ENCODE measurements at regions of chr1 and their contacts with region 1.

Region 1: DNA sequence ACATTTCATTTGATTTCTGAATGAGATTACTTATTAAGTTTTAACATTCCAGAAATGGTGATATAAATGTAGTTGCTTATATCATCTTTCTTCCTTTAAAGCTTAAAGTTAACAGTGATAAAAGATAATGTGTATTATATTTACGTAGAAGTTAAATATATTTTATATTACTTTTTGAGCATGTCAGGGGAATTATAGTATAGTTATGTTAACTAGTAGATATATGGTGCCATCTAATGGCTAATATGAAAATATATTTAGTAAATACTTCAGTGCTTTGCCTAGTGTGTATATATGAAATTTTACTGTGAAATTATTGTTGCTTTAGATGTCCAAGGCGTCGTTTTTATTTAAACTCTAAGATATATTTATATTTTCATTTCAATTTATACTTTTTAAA is 51.5 kb downstream of the SYT14 start:
- DNase-seq: no peak

Region 2: DNA sequence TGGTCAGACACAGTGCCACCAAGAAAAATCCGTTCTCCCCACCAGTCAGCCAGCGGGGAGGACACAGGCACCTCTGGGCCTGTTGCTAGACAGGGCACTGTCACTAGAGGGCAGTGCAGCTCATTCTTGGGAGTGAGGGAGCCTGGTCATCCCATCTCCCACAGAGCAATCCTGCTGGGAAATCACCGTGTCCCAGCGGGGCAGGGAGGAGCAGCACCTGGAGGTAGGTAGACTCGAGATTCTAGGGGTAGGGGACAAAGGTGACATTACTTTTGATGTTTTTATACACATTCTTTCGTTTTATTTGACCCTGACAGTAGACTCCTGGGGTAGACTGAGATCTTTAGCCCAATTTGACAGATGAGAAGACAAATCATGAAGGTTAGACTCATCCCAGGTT is 412.7 kb before region 1 on chr1:
- intact Hi-C with region 1: loop called (anchors 10 kb)
- DNase-seq: peak; percentile 91

Region 3: DNA sequence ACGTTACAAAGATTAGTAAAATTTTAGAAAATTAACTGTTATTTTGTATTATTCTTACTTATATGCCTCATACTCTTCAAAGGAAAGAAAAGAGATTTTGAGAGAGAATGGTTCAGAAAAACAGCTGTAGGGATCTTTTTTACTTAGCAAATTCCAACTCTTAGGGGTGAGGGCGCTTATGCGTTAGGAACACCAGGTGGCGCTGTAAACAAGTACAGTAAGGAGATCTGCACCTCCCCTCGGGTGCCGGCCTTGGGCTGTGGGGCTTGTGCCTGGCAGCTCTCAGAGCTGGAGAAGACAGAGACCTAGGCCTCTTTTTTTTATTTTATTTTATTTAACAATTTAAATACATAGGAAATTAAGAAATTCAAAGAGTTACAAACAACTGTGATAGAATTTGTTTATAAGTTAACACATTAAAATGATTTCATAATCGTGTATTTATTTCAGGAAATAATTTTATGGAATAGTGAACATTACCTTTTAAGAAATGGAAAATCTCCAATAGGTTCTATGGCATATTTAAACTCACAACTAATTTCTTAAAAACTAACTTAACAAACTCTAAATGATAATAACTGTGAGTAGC is 129.1 kb before region 1 on chr1:
- intact Hi-C with region 1: loop called (anchors 2 kb)
- DNase-seq: no peak

Region 4: DNA sequence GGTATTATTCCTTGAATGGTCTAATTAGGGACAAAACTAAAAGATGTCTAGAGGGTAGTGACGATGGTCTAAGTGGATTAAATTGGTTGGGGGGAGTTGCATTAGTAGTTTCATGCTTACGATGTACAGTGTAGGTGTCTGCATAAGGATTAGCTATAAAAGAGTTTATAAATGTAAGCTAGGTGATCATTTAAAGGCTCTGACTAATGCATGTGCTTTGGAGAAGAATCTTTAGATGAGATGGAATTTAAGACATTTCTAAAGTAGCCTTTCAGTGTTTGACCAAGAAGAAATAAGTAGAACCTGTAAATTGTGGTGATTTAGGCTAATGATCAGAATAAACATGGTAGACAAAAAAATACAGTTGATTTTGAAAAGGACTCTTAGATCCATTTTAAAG is 44.1 kb before region 1 on chr1:
- intact Hi-C with region 1: no loop called
- DNase-seq: no peak

Region 5: DNA sequence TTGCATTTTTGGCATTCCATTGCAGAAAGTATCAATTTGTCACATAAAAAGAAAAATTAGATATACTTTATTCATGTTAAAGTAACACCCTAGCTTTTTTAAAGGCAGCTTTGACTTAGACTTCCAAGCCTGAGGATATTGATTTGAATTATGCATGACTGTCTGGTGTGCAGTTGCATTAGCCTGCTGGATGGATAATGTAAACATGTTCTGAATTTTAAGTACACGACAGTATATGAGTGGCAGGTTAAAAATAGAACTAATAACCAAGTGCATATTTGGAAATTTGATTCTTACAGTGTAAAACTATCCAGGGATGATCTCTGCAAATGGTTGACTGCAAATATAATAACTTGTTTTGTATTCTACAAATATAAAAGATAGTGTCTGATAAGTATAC is 72.5 kb after region 1 on chr1:
- intact Hi-C with region 1: no loop called
- DNase-seq: no peak

Region 6: GRCh38 chr1:210663730-210664573 is 674.4 kb after region 1 on chr1:
- intact Hi-C with region 1: no loop called
- DNase-seq: no peak

Measured in cardiac septum (tissue), 1 donor.